Left colon (tissue), 2 donors: ENCODE measurements at regions of chr10 and their contacts with region 1.

Region 1: GRCh38 chr10:112434988-112435619 is 11.6 kb downstream of the ZDHHC6 start:
- DNase-seq: no peak
- ATAC-seq: peak; percentile 73

Region 2: DNA sequence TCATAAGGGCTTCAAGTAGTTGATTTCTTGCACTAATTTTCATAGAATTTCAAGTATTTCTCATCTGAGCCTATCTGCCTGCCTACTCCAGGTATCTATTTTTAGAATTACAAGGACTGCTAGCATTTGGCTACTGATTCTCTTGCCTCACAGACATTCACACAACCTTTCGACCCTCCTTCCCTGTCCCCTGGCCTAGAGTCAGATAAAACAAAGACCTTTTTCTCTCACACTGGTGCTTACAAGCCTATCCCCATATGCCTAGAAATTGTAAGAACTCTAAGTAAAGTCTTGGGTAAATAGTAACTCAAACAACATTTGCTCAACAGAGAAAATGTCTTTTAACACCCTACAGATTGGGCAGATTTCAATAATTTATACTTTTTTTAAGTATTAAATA is 257.9 kb before region 1 on chr10:
- intact Hi-C with region 1: loop called in 1 of 2 experiments (anchors 10 kb)
- DNase-seq: no peak
- ATAC-seq: no peak